ENCODE measurements at regions of chr9 and their contacts with region 1.

Region 1: DNA sequence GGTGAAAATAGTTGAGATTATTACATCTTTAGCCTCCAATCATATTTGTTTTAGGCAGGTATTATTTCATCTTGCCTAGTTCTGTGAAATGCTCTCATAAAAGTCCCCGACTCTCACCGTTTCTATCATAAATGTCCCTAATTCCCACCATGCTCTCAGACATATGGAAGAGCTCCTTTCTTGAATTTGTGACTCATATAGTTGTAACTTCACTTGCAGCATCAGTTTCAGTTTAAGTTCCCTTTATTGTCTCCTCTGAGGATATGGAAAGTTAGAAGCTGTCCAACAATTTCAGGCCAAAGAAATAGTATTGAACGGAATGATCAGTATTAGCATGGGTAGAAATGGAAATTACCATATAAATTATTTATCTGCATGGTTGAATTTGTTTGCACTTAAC is 187.5 kb upstream of the NR4A3 start:
- DNase-seq: peak; percentile 46 to 81 (median 69)
- H3K4me3 ChIP-seq: no peak overlapping the region
- H3K4me3 Mint-ChIP-seq: peak overlapping the region in 1 of 2 donors; percentile 54
- H3K27ac ChIP-seq: peak overlapping the region in 1 of 2 donors; percentile 61
- H3K27ac Mint-ChIP-seq: peak overlapping the region; percentile 7 to 90 (median 81)
- H3K4me1 ChIP-seq: peaks cover 16 to 27% of the 10 kb centered on the region in 2 donors
- H3K4me1 Mint-ChIP-seq: peaks cover 28% of the 10 kb centered on the region
- H3K27me3 ChIP-seq: no peaks in the 10 kb centered on the region
- H3K27me3 Mint-ChIP-seq: peaks cover 0 to 2% (median 2%) of the 10 kb centered on the region in 3 donors
- CTCF ChIP-seq: no peak

Region 2: GRCh38 chr9:99465231-99465907 is 168.8 kb before region 1 on chr9:
- intact Hi-C with region 1: no loop called
- DNase-seq: no peak
- H3K4me3 ChIP-seq: no peak overlapping the region
- H3K4me3 Mint-ChIP-seq: no peak overlapping the region
- H3K27ac ChIP-seq: no peak overlapping the region
- H3K27ac Mint-ChIP-seq: no peak overlapping the region
- H3K4me1 ChIP-seq: no peaks in the 10 kb centered on the region
- H3K4me1 Mint-ChIP-seq: no peaks in the 10 kb centered on the region
- H3K27me3 ChIP-seq: no peaks in the 10 kb centered on the region
- H3K27me3 Mint-ChIP-seq: peaks cover 0 to 4% (median 3%) of the 10 kb centered on the region in 3 donors
- CTCF ChIP-seq: no peak

Region 3: GRCh38 chr9:99579964-99580363 is 54.2 kb before region 1 on chr9:
- intact Hi-C with region 1: loop called in 1 of 2 experiments (anchors 5 kb)
- DNase-seq: peak; percentile 66 to 86 (median 80)
- H3K4me3 ChIP-seq: peak overlapping the region in 1 of 3 experiments; percentile 28
- H3K4me3 Mint-ChIP-seq: no peak overlapping the region
- H3K27ac ChIP-seq: peak overlapping the region; percentile 4 to 76
- H3K27ac Mint-ChIP-seq: peak overlapping the region; percentile 82 to 91 (median 89)
- H3K4me1 ChIP-seq: peaks cover 32 to 35% of the 10 kb centered on the region in 2 donors
- H3K4me1 Mint-ChIP-seq: peaks cover 48% of the 10 kb centered on the region
- H3K27me3 ChIP-seq: no peaks in the 10 kb centered on the region
- H3K27me3 Mint-ChIP-seq: peaks cover 0 to 3% (median 0%) of the 10 kb centered on the region in 3 donors
- CTCF ChIP-seq: no peak

Region 4: DNA sequence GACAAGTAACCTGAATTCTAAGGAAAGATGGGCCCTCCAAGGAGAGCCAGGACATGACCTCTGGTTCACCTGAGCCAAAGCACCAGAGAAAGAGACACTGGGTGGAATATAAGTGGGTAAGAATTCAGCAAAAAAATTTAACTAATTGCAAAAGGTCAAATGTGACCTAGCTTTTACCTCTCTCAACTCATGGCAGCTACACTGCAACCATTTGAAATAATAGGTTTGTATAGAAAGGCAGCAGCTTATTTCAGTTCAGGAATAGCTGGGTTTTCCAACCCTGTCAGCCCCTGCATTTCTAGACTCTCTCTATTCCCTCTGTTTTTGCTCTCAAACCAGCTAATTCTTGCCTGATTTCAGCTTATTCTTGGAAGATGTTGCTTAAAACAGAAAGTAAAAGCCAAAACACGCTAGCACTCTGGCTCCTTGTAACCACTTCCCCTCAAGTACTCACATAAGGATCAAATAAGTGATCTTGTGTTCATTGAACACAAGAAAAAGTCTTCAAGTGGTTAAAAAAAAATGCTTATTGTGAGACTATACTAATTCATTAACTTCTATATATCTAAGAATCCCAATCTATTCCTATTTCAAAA is 86.4 kb after region 1 on chr9:
- intact Hi-C with region 1: loop called in 1 of 2 experiments (anchors 10 kb)
- DNase-seq: peak; percentile 11 to 32 (median 22)
- H3K4me3 ChIP-seq: peak overlapping the region in 2 of 3 experiments; percentile 37 to 63
- H3K4me3 Mint-ChIP-seq: peak overlapping the region; percentile 37 to 72
- H3K27ac ChIP-seq: peak overlapping the region in 1 of 2 donors; percentile 75
- H3K27ac Mint-ChIP-seq: peak overlapping the region in 6 of 7 donors; percentile 9 to 87 (median 59)
- H3K4me1 ChIP-seq: peaks cover 5 to 13% of the 10 kb centered on the region in 2 donors
- H3K4me1 Mint-ChIP-seq: peaks cover 15% of the 10 kb centered on the region
- H3K27me3 ChIP-seq: no peaks in the 10 kb centered on the region
- H3K27me3 Mint-ChIP-seq: no peaks in the 10 kb centered on the region
- CTCF ChIP-seq: no peak

Measured in CD14-positive monocyte (primary cell).